ENCODE measurements at regions of chr10 and their contacts with region 1.

Region 1: DNA sequence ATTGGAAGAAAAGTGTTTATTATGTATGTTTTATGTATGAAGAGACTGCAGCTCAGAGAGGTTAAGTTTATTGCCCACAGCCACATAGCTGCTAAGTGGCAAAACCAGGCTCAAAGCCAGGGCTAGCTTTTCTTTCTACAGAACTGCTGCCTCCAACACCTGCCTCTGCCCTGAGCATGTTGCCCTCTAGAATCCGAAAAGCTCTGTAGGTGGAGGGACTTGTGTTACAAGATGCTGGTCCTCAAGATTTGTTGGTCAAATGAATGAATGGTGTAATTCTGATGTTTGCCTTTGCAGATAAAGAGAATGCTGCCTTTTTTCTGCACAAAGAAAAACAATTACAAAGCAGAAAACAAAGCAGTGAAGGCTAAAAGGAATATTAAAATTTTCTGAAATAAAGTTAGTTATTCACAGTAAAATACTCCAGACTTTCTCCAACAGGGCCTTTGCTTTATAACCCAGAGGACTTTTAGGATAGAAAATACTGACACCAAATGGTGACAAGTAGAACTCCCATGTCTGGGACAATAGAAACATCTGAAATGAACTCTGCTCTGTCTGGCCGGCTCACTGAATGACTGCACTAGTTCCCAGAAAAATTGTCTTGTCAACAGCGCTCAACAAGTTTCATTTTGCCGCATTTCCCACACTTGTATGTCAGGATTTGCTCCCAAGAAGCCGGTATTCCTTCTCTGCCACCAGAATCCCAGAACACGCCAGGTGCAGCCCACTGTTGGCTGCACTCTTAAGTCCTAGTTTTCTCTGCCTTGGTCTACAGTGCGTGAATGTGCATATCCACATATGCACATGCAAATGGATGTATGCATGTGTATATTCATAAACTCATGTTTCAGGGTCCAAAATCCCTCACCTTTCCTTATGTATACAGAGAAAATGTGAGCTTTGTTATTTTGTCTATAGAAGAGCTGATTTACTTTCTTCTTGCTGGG is 11.0 kb upstream of the DNTT start:
- DNase-seq: no peak
- ATAC-seq: peak; percentile 67
- H3K4me3 Mint-ChIP-seq: no peak overlapping the region
- H3K27ac Mint-ChIP-seq: peak overlapping the region; percentile 68
- H3K4me1 Mint-ChIP-seq: peaks cover 59% of the 10 kb centered on the region
- H3K27me3 Mint-ChIP-seq: no peaks in the 10 kb centered on the region
- CTCF ChIP-seq: peak; percentile 62

Region 2: DNA sequence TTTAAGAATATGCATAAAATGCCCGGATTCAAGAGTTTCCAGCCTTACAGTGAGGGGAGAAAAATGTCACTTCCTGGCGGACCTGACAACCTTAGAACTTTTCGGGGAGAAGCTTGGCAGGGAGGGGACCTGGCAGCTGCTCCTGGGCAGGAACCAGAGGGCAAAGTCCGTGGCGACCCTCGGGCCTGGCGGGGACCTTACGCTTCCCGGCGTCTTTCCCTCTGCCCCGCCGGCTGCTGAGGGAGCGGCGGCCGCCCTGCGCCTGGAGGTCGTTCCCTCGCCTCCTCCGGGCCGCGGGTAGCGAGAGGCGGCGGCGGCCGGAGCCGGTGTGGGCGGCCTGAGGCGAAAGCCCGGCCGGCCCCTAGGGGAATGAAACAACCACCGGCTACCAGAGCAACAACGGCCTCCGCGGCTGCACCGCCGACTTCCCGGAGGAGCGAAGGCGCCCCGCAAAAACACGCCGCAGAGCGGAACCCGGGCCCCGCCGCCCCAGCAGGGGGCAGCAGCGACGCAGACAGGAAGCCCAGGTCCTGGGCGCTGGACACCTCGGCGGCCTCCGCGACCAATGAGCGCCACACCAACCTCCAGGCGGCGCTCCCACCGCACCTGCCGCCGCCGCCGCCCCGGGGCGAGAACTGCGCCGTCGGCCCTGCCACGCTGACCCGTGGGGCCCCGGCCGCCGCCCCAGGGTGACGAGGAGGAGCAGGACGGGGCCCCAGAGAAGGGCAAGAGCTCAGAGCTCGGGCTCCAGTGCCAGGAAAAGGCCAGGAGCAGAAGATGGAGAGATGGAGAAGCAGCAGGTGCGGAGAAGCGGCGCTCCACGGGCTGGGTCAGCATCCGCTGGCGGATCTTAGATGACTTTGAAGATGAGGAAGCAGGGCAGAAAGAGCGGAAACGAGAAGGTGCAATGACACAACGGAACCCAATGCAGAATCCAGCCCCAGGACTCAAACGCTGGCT is 1109.7 kb before region 1 on chr10:
- CTCF ChIA-PET with region 1: no interaction called
- POLR2A ChIA-PET with region 1: no interaction called
- intact Hi-C with region 1: no loop called
- DNase-seq: peak; percentile 87
- ATAC-seq: peak; percentile 96
- H3K4me3 Mint-ChIP-seq: peak overlapping the region; percentile 83
- H3K27ac Mint-ChIP-seq: peak overlapping the region; percentile 84
- H3K4me1 Mint-ChIP-seq: peaks cover 7% of the 10 kb centered on the region
- H3K27me3 Mint-ChIP-seq: no peaks in the 10 kb centered on the region
- CTCF ChIP-seq: peak; percentile 68

Region 3: GRCh38 chr10:96043033-96043932 is 250.0 kb before region 1 on chr10 and contains the start of gene CCNJ:
- CTCF ChIA-PET with region 1: interaction called, 5 read pairs
- POLR2A ChIA-PET with region 1: no interaction called
- intact Hi-C with region 1: loop called (anchors 10 kb)
- DNase-seq: peak; percentile 83
- ATAC-seq: peak; percentile 88
- H3K4me3 Mint-ChIP-seq: peak within 1 kb of the TSS; percentile 93
- H3K27ac Mint-ChIP-seq: peak within 1 kb of the TSS; percentile 80
- H3K4me1 Mint-ChIP-seq: peaks cover 41% of the 10 kb centered on the region
- H3K27me3 Mint-ChIP-seq: no peaks in the 10 kb centered on the region
- CTCF ChIP-seq: no peak
- total RNA-seq, gene CCNJ: 9.8 and 10.2 TPM in 2 replicates

Region 4: GRCh38 chr10:96236090-96236478 is 57.2 kb before region 1 on chr10:
- CTCF ChIA-PET with region 1: interaction called, 612 read pairs
- POLR2A ChIA-PET with region 1: interaction called, 169 read pairs
- intact Hi-C with region 1: no loop called
- DNase-seq: no peak
- ATAC-seq: peak; percentile 67
- H3K4me3 Mint-ChIP-seq: peak overlapping the region; percentile 57
- H3K27ac Mint-ChIP-seq: peak overlapping the region; percentile 85
- H3K4me1 Mint-ChIP-seq: peaks cover 93% of the 10 kb centered on the region
- H3K27me3 Mint-ChIP-seq: no peaks in the 10 kb centered on the region
- CTCF ChIP-seq: no peak

Region 5: GRCh38 chr10:96257944-96258343 is 35.3 kb before region 1 on chr10:
- CTCF ChIA-PET with region 1: interaction called, 4 read pairs
- POLR2A ChIA-PET with region 1: interaction called, 72 read pairs
- intact Hi-C with region 1: loop called (anchors 5 kb)
- DNase-seq: no peak
- ATAC-seq: peak; percentile 16
- H3K4me3 Mint-ChIP-seq: peak overlapping the region; percentile 48
- H3K27ac Mint-ChIP-seq: peak overlapping the region; percentile 83
- H3K4me1 Mint-ChIP-seq: peaks cover 90% of the 10 kb centered on the region
- H3K27me3 Mint-ChIP-seq: no peaks in the 10 kb centered on the region
- CTCF ChIP-seq: no peak

Region 6: GRCh38 chr10:96271016-96271829 is 22.0 kb before region 1 on chr10 and contains the start of gene BLNK:
- CTCF ChIA-PET with region 1: interaction called, 74 read pairs
- POLR2A ChIA-PET with region 1: interaction called, 344 read pairs
- intact Hi-C with region 1: loop called (anchors 1 kb)
- DNase-seq: peak; percentile 40
- ATAC-seq: peak; percentile 56
- H3K4me3 Mint-ChIP-seq: peak within 1 kb of the TSS; percentile 91
- H3K27ac Mint-ChIP-seq: peak within 1 kb of the TSS; percentile 98
- H3K4me1 Mint-ChIP-seq: peaks cover 81% of the 10 kb centered on the region
- H3K27me3 Mint-ChIP-seq: no peaks in the 10 kb centered on the region
- CTCF ChIP-seq: no peak
- total RNA-seq, gene BLNK: 238 and 267 TPM in 2 replicates

Region 7: GRCh38 chr10:96370584-96371157 is 77.4 kb after region 1 on chr10:
- CTCF ChIA-PET with region 1: no interaction called
- POLR2A ChIA-PET with region 1: no interaction called
- intact Hi-C with region 1: no loop called
- DNase-seq: peak; percentile 42
- ATAC-seq: peak; percentile 43
- H3K4me3 Mint-ChIP-seq: no peak overlapping the region
- H3K27ac Mint-ChIP-seq: no peak overlapping the region
- H3K4me1 Mint-ChIP-seq: peaks cover 6% of the 10 kb centered on the region
- H3K27me3 Mint-ChIP-seq: peaks cover 10% of the 10 kb centered on the region
- CTCF ChIP-seq: peak; percentile 39

Region 8: GRCh38 chr10:96395931-96396877 is 103.0 kb after region 1 on chr10:
- CTCF ChIA-PET with region 1: no interaction called
- POLR2A ChIA-PET with region 1: no interaction called
- intact Hi-C with region 1: no loop called
- DNase-seq: peak; percentile 42
- ATAC-seq: peak; percentile 79
- H3K4me3 Mint-ChIP-seq: no peak overlapping the region
- H3K27ac Mint-ChIP-seq: no peak overlapping the region
- H3K4me1 Mint-ChIP-seq: peaks cover 5% of the 10 kb centered on the region
- H3K27me3 Mint-ChIP-seq: peaks cover 24% of the 10 kb centered on the region
- CTCF ChIP-seq: peak; percentile 90

Region 9: GRCh38 chr10:96416643-96417042 is 123.4 kb after region 1 on chr10:
- CTCF ChIA-PET with region 1: no interaction called
- POLR2A ChIA-PET with region 1: interaction called, 14 read pairs
- intact Hi-C with region 1: no loop called
- DNase-seq: no peak
- ATAC-seq: no peak
- H3K4me3 Mint-ChIP-seq: no peak overlapping the region
- H3K27ac Mint-ChIP-seq: no peak overlapping the region
- H3K4me1 Mint-ChIP-seq: no peaks in the 10 kb centered on the region
- H3K27me3 Mint-ChIP-seq: peaks cover 9% of the 10 kb centered on the region
- CTCF ChIP-seq: no peak